ENCODE measurements at regions of chr12 and their contacts with region 1.

Region 1: DNA sequence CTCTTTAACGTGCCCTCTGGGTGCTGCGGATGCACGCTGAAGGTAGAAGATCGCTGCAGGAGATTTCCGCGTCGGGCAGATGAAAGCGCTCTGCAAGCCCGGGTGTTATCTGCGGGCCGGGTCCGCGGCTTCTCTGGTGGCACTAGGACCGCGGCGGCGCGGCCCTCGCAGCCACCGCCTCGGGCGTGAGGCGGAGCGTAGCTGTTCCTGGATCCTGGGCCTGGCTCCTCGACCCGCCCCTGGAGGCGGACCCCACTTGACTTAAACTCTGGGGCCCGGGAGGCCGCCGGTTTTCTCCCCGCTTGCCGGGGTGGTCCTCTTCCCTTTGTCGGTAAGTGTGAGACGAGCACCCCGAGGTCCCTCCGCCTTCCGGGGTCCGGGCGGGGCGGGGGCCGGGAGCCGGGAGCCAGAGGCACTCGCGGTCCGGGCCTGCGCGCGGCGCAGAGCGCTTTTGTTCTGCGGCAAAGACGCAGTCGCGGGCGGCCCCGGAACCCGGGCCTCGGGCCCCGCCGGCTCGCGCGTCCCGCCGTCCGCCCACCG is at the start of gene RESF1:
- DNase-seq: peak; percentile 88
- H3K4me3 Mint-ChIP-seq: peak within 1 kb of the TSS; percentile 93
- H3K27ac Mint-ChIP-seq: peak within 1 kb of the TSS; percentile 98
- H3K4me1 Mint-ChIP-seq: peaks cover 63% of the 10 kb centered on the region
- H3K27me3 Mint-ChIP-seq: no peaks in the 10 kb centered on the region
- total RNA-seq, gene RESF1: 41.9 and 43.2 TPM in 2 replicates

Region 2: GRCh38 chr12:30473274-30473673 is 1486.0 kb before region 1 on chr12:
- intact Hi-C with region 1: no loop called
- DNase-seq: no peak
- H3K4me3 Mint-ChIP-seq: no peak overlapping the region
- H3K27ac Mint-ChIP-seq: no peak overlapping the region
- H3K4me1 Mint-ChIP-seq: no peaks in the 10 kb centered on the region
- H3K27me3 Mint-ChIP-seq: no peaks in the 10 kb centered on the region

Region 3: GRCh38 chr12:31659087-31659933 is 299.9 kb before region 1 on chr12 and contains the start of gene ETFBKMT:
- intact Hi-C with region 1: loop called (anchors 1 kb)
- DNase-seq: peak; percentile 95
- H3K4me3 Mint-ChIP-seq: peak within 1 kb of the TSS; percentile 95
- H3K27ac Mint-ChIP-seq: peak within 1 kb of the TSS; percentile 97
- H3K4me1 Mint-ChIP-seq: peaks cover 5% of the 10 kb centered on the region
- H3K27me3 Mint-ChIP-seq: no peaks in the 10 kb centered on the region
- total RNA-seq, gene ETFBKMT: 0.37 and 0.39 TPM in 2 replicates

Region 4: GRCh38 chr12:31749024-31749704 is 210.1 kb before region 1 on chr12:
- intact Hi-C with region 1: loop called (anchors 5 kb)
- DNase-seq: peak; percentile 67
- H3K4me3 Mint-ChIP-seq: no peak overlapping the region
- H3K27ac Mint-ChIP-seq: peak overlapping the region; percentile 5
- H3K4me1 Mint-ChIP-seq: peaks cover 23% of the 10 kb centered on the region
- H3K27me3 Mint-ChIP-seq: peaks cover 20% of the 10 kb centered on the region

Region 5: DNA sequence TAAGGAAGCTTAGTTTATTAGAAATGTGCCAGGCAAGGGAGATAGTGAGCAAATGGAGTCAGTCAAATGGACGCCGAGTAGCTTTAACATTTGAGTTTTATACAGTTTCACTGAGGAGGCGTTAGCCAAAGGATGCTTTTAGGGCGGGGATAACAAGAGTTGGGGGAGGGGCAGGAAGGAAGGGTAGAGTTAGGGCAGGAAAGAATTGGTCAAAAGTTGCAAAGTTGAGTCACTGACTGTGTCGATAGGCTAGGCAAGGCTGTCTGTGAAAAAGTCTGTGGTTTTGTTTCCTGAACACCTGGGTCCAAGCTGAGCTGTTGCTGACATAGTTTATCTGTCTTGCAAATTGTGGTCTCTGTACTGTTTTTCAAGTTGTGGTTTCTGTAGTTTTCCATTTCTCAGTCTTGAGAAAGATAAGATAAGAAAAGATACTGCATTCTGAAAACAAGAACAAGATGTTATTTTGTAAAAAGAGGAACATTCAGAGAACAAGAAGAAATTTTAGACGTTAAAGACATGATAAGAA is 62.7 kb before region 1 on chr12:
- intact Hi-C with region 1: loop called (anchors 1 kb)
- DNase-seq: peak; percentile 86
- H3K4me3 Mint-ChIP-seq: peak overlapping the region; percentile 43
- H3K27ac Mint-ChIP-seq: peak overlapping the region; percentile 89
- H3K4me1 Mint-ChIP-seq: peaks cover 31% of the 10 kb centered on the region
- H3K27me3 Mint-ChIP-seq: no peaks in the 10 kb centered on the region

Region 6: GRCh38 chr12:32106517-32107358 is 147.5 kb after region 1 on chr12 and contains the start of gene BICD1:
- intact Hi-C with region 1: loop called (anchors 2 kb)
- DNase-seq: peak; percentile 65
- H3K4me3 Mint-ChIP-seq: peak within 1 kb of the TSS; percentile 91
- H3K27ac Mint-ChIP-seq: peak within 1 kb of the TSS; percentile 81
- H3K4me1 Mint-ChIP-seq: peaks cover 26% of the 10 kb centered on the region
- H3K27me3 Mint-ChIP-seq: peaks cover 16% of the 10 kb centered on the region
- total RNA-seq, gene BICD1: 8.0 and 8.8 TPM in 2 replicates